T-cell (primary cell): ENCODE measurements at regions of chr17 and their contacts with region 1.

Region 1: GRCh38 chr17:37225458-37225857 is 150.3 kb upstream of the C17orf78 start:
- DNase-seq: no peak
- ATAC-seq: no peak
- H3K4me3 ChIP-seq: no peak overlapping the region
- H3K4me3 Mint-ChIP-seq: no peak overlapping the region
- H3K27ac ChIP-seq: no peak overlapping the region
- H3K27ac Mint-ChIP-seq: no peak overlapping the region
- H3K4me1 ChIP-seq: no peaks in the 10 kb centered on the region
- H3K4me1 Mint-ChIP-seq: no peaks in the 10 kb centered on the region
- H3K27me3 ChIP-seq: no peaks in the 10 kb centered on the region
- H3K27me3 Mint-ChIP-seq: no peaks in the 10 kb centered on the region

Region 2: DNA sequence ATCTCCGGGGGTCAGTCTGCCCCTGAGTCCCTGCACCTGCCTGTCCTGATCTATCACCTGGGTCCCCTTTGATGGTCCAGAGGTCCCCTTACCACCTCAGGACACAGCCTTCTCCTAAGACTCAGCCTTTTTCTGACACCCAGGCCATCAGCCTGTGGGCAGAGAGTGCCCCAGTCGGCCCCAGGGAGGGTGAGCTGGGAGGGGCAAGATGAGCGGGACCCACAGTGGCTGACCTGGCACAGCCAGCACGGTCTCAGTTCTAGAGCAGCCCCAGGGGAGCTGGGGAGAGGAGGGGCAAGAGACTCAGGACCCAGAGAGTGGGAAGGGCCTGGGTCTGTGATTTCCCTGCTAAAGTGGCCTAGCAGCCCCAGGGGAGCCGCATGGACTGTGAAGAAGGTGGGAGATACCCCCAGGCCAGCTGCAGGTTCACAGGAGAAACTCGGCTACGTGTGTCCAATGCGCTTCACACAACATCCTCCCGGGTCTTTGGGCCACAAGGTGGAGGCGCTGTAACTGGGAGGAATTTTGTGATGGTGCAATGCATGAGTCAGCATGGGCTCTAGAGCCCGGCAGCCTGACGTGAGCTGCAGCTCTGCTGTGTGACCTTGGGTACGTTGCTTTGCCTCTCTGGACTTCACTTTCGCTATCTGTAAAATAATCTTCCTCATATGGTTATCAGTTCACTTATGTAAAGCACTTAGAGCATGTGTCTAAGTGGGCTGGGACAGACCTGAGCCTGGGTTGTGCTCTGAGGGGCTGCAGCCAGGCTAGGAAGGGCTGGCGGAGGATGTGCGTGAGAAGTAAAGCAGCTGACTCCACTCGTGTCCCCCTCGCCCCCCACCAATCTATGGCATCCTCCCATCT is 355.4 kb before region 1 on chr17:
- CTCF ChIA-PET with region 1: no interaction called
- POLR2A ChIA-PET with region 1: no interaction called
- DNase-seq: no peak
- ATAC-seq: no peak
- H3K4me3 ChIP-seq: no peak overlapping the region
- H3K4me3 Mint-ChIP-seq: no peak overlapping the region
- H3K27ac ChIP-seq: no peak overlapping the region
- H3K27ac Mint-ChIP-seq: no peak overlapping the region
- H3K4me1 ChIP-seq: no peaks in the 10 kb centered on the region
- H3K4me1 Mint-ChIP-seq: no peaks in the 10 kb centered on the region
- H3K27me3 ChIP-seq: peaks cover 0 to 9% of the 10 kb centered on the region in 2 experiments
- H3K27me3 Mint-ChIP-seq: peaks cover 10 to 12% of the 10 kb centered on the region in 2 donors

Region 3: GRCh38 chr17:37239690-37240334 is 14.4 kb after region 1 on chr17:
- CTCF ChIA-PET with region 1: no interaction called
- POLR2A ChIA-PET with region 1: interaction called in 1 of 2 experiments, 10 read pairs
- DNase-seq: peak in 2 of 35 experiments; percentile 3 to 50
- ATAC-seq: no peak
- H3K4me3 ChIP-seq: no peak overlapping the region
- H3K4me3 Mint-ChIP-seq: no peak overlapping the region
- H3K27ac ChIP-seq: no peak overlapping the region
- H3K27ac Mint-ChIP-seq: no peak overlapping the region
- H3K4me1 ChIP-seq: no peaks in the 10 kb centered on the region
- H3K4me1 Mint-ChIP-seq: no peaks in the 10 kb centered on the region
- H3K27me3 ChIP-seq: no peaks in the 10 kb centered on the region
- H3K27me3 Mint-ChIP-seq: no peaks in the 10 kb centered on the region

Region 4: DNA sequence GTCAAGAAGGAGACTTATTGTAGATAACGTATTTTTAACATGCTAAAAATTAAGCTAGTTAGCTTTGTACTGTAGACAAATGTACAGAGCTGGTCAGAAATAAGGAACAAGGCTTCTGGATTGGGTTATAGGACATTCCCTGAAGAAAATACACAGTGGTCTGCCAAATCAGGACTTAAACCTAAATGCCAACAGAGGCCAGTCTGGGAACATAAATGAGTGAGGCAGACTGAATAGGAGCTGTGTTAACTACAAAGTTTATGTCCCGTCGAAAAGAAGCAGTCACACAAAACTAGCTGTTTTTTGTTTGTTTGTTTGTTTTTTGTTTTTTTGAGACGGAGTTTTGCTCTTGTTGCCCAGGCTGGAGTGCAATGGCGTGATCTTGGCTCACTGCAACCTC is 30.0 kb after region 1 on chr17:
- CTCF ChIA-PET with region 1: no interaction called
- POLR2A ChIA-PET with region 1: no interaction called
- DNase-seq: no peak
- ATAC-seq: no peak
- H3K4me3 ChIP-seq: no peak overlapping the region
- H3K4me3 Mint-ChIP-seq: no peak overlapping the region
- H3K27ac ChIP-seq: no peak overlapping the region
- H3K27ac Mint-ChIP-seq: no peak overlapping the region
- H3K4me1 ChIP-seq: no peaks in the 10 kb centered on the region
- H3K4me1 Mint-ChIP-seq: no peaks in the 10 kb centered on the region
- H3K27me3 ChIP-seq: no peaks in the 10 kb centered on the region
- H3K27me3 Mint-ChIP-seq: no peaks in the 10 kb centered on the region

Region 5: GRCh38 chr17:37310940-37311339 is 85.5 kb after region 1 on chr17:
- CTCF ChIA-PET with region 1: no interaction called
- POLR2A ChIA-PET with region 1: no interaction called
- DNase-seq: no peak
- ATAC-seq: no peak
- H3K4me3 ChIP-seq: no peak overlapping the region
- H3K4me3 Mint-ChIP-seq: no peak overlapping the region
- H3K27ac ChIP-seq: no peak overlapping the region
- H3K27ac Mint-ChIP-seq: no peak overlapping the region
- H3K4me1 ChIP-seq: no peaks in the 10 kb centered on the region
- H3K4me1 Mint-ChIP-seq: no peaks in the 10 kb centered on the region
- H3K27me3 ChIP-seq: no peaks in the 10 kb centered on the region
- H3K27me3 Mint-ChIP-seq: no peaks in the 10 kb centered on the region